ENCODE measurements at regions of chr2 and their contacts with region 1.

Region 1: DNA sequence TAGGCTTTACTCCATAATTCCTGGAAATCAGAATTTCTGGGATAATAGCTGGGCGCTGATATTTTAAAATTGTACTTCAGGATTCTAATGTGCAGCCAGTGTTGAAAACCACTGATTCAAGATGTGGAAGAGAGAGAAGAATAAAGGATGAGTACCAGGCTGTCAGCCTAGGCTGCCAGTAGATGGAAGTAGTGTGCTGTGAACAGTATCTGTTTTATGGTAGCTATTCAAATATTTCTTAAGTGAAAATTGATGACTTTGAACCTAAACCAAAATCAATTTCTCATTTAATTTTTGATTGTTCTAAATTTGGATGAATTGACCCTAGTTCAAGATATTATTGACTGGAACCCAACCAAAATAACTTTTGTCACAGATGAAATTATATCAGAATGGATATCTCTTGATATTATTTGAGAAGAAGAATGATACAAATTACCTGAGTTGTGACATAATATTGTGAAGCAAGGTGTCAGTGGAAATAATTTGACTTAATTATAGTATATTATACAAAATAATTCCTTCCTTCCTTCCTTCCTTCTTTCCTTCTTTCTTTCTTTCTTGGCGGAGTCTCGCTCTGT is 88.1 kb downstream of the COMMD1 start:
- DNase-seq: peak; percentile 52
- ATAC-seq: peak; percentile 75
- H3K4me3 ChIP-seq: no peak overlapping the region
- H3K27ac ChIP-seq: no peak overlapping the region
- H3K4me1 ChIP-seq: no peaks in the 10 kb centered on the region
- H3K27me3 ChIP-seq: no peaks in the 10 kb centered on the region
- CTCF ChIP-seq: peak; percentile 77
- EP300 ChIP-seq: no peak
- POLR2A ChIP-seq: no peak
- RAD21 ChIP-seq: peak; percentile 64

Region 2: DNA sequence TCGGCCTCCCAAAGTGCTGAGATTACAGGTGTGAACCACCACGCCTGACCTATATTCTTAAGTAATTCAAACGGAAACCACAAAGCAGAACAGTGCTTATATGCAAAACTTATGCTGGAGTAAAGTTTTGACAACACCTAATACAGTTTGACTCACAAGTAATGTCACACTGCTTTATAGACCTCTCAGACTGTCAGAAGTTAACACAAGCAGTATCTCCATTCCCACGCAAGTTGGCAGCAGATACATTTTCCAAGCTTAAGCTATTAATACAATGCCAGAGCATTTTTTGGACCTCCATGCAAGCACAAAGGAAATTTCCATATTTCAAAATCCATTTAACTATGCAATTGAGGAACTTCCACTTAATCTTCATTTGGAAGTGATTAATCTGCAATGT is 948.9 kb before region 1 on chr2:
- CTCF ChIA-PET with region 1: no interaction called
- POLR2A ChIA-PET with region 1: no interaction called
- in situ Hi-C with region 1: no loop called
- intact Hi-C with region 1: no loop called
- DNase-seq: no peak
- ATAC-seq: no peak
- H3K4me3 ChIP-seq: no peak overlapping the region
- H3K27ac ChIP-seq: no peak overlapping the region
- H3K4me1 ChIP-seq: peaks cover 5% of the 10 kb centered on the region; the same call in 1 of the 2 replicates
- H3K27me3 ChIP-seq: no peaks in the 10 kb centered on the region
- CTCF ChIP-seq: no peak
- EP300 ChIP-seq: no peak
- POLR2A ChIP-seq: no peak
- RAD21 ChIP-seq: no peak

Region 3: DNA sequence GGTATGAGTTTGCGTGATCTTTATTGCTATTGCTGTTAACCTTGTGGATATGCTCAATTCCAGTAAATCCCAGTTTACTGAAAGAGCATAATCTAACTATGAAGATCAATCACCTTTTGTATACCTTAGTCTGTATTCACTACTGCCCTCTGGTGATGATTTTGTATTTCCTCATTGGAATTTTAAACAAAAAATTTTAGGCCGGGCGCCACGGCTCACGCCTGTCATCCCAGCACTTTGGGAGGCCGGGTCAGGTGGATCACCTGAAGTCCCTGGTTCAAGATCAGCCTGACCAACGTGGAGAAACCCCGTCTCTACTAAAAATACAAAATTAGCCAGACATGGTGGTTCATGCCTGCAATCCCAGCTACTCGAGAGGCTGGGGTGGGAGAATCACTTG is 82.9 kb before region 1 on chr2:
- CTCF ChIA-PET with region 1: no interaction called
- POLR2A ChIA-PET with region 1: no interaction called
- in situ Hi-C with region 1: no loop called
- intact Hi-C with region 1: loop called (anchors 5 kb)
- DNase-seq: peak; percentile 24
- ATAC-seq: no peak
- H3K4me3 ChIP-seq: no peak overlapping the region
- H3K27ac ChIP-seq: no peak overlapping the region
- H3K4me1 ChIP-seq: peaks cover 22% of the 10 kb centered on the region
- H3K27me3 ChIP-seq: no peaks in the 10 kb centered on the region
- CTCF ChIP-seq: peak; percentile 40
- EP300 ChIP-seq: no peak
- POLR2A ChIP-seq: no peak
- RAD21 ChIP-seq: no peak

Region 4: DNA sequence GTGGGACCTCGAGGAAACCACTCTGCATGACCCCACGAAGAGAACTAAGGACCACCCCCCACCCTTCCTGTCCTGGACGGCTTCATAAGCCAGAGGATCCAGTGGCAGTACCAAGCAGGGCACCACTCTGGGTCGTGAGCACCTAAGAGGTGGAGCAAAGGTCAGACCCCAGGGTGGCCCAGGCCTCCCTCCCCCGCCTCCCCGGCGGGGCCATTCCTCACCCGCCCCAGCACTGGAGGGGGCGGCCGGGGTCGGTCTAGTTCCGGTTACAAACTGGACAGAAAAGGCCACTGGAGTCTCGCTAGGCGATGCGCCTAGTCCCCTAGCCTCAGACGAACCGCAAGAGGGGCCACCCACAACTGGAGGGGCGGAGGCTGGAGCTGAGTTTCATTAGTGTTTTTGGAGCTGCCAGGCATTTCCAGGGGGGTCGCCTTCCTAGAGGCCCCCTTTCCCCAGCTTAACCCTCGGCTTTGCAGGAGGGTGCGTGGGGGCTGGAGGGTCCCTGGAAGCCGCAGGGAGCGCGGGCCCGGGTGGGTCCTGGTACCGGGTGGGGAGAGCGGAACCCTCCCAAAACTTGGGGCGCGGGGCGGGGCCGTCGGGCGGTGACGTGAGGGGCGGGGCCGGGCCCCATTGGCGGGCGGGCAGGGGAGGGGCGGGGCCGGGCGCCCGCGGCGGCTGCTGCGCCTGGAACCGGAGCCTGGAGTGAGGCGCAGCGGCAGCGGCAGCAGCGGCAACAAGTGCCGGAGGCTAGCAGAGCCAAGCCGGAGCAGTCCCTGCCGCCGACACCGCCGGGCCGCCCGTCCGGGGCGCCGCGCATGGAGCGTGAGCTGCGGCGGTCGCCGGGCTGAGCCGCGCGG is 202.1 kb after region 1 on chr2 and contains the start of gene B3GNT2:
- CTCF ChIA-PET with region 1: no interaction called
- POLR2A ChIA-PET with region 1: no interaction called
- in situ Hi-C with region 1: no loop called
- intact Hi-C with region 1: loop called (anchors 10 kb)
- DNase-seq: peak; percentile 56
- ATAC-seq: peak; percentile 75
- H3K4me3 ChIP-seq: peak within 1 kb of the TSS; percentile 76 to 96 (median 96)
- H3K27ac ChIP-seq: peak within 1 kb of the TSS; percentile 86
- H3K4me1 ChIP-seq: peaks cover 68% of the 10 kb centered on the region
- H3K27me3 ChIP-seq: no peaks in the 10 kb centered on the region; a peak in 1 of 5 replicates
- CTCF ChIP-seq: no peak
- EP300 ChIP-seq: no peak
- POLR2A ChIP-seq: peak; percentile 84 to 95
- RAD21 ChIP-seq: peak; percentile 61
- total RNA-seq, gene B3GNT2: 19.5 and 28.5 TPM in 2 replicates

Region 5: GRCh38 chr2:62293490-62294271 is 300.1 kb after region 1 on chr2:
- CTCF ChIA-PET with region 1: no interaction called
- POLR2A ChIA-PET with region 1: no interaction called
- in situ Hi-C with region 1: no loop called
- intact Hi-C with region 1: loop called (anchors 1 kb)
- DNase-seq: peak; percentile 51
- ATAC-seq: peak; percentile 87
- H3K4me3 ChIP-seq: peak overlapping the region; percentile 50 to 78 (median 59)
- H3K27ac ChIP-seq: no peak overlapping the region
- H3K4me1 ChIP-seq: peaks cover 29% of the 10 kb centered on the region
- H3K27me3 ChIP-seq: no peaks in the 10 kb centered on the region; a peak in 1 of 5 replicates
- CTCF ChIP-seq: peak; percentile 6; the same call in 1 of the 2 replicates
- EP300 ChIP-seq: no peak
- POLR2A ChIP-seq: 0 out of 4 replicates have a peak, but pooled peaks of 1 of the 2 experiments have one; percentile 16
- RAD21 ChIP-seq: 0 out of 2 replicates have a peak, but pooled peaks have one; percentile 21

Measured in HepG2 (cell line).